ENCODE measurements at regions of chr5 and their contacts with region 1.

Region 1: GRCh38 chr5:137220523-137220927 is 278.6 kb downstream of the SPOCK1 start:
- DNase-seq: peak; percentile 96
- H3K4me3 Mint-ChIP-seq: no peak overlapping the region
- H3K27ac Mint-ChIP-seq: no peak overlapping the region
- H3K4me1 Mint-ChIP-seq: peaks cover 30% of the 10 kb centered on the region
- H3K27me3 Mint-ChIP-seq: no peaks in the 10 kb centered on the region
- CTCF ChIP-seq: peak; percentile 76

Region 2: GRCh38 chr5:136584474-136584873 is 636.1 kb before region 1 on chr5:
- CTCF ChIA-PET with region 1: no interaction called
- POLR2A ChIA-PET with region 1: no interaction called
- intact Hi-C with region 1: no loop called
- DNase-seq: no peak
- H3K4me3 Mint-ChIP-seq: no peak overlapping the region
- H3K27ac Mint-ChIP-seq: no peak overlapping the region
- H3K4me1 Mint-ChIP-seq: no peaks in the 10 kb centered on the region
- H3K27me3 Mint-ChIP-seq: peaks cover 23% of the 10 kb centered on the region
- CTCF ChIP-seq: no peak

Region 3: DNA sequence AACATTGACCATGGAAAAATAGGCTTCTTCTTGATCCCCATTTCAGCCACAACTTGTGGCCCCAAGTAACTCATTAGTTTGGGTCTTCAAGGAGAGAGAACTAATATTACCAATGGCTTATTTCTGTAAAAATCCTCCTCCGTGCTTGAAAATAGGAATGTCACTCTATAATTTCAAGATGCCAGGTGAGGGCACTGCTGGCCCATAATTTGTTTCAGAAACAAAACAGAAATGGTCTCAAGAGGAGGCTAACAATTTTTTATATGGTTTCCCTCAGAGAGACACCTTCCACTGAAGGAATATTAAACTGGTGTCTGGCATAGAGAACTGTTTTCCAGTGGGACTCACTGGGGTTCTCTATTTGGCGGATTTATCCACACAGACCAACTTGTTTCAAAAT is 418.1 kb before region 1 on chr5:
- CTCF ChIA-PET with region 1: interaction called, 39 read pairs
- POLR2A ChIA-PET with region 1: no interaction called
- intact Hi-C with region 1: loop called (anchors 1 kb)
- DNase-seq: peak; percentile 34
- H3K4me3 Mint-ChIP-seq: no peak overlapping the region
- H3K27ac Mint-ChIP-seq: no peak overlapping the region
- H3K4me1 Mint-ChIP-seq: no peaks in the 10 kb centered on the region
- H3K27me3 Mint-ChIP-seq: peaks cover 43% of the 10 kb centered on the region
- CTCF ChIP-seq: peak; percentile 49

Region 4: DNA sequence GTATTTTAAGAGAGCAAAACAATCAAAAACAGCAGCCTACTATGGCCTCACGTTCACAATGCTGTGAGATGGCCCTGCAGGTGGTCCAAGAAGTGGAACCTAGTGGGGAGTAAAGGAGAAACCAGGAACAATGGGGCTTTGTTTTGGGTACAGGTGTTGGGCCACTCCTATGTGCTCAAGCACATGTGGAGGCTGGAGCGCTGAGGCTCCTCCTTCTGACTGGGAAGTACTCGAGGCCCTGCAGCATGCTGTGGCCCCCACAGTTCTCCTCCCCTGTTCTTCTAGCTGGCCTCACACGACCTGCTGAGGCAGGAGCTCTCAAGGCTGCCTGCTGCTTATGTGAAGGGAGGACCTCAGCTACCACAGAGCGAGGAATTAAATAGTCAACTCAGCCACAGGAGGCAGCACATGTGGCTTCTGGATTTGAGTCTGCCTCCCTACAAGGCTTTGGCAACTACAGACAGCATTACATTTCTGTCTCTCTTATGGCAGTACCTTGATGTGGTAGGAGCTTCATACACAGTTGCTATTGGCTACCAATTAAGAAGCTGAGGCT is 203.7 kb before region 1 on chr5:
- CTCF ChIA-PET with region 1: no interaction called
- POLR2A ChIA-PET with region 1: no interaction called
- intact Hi-C with region 1: no loop called
- DNase-seq: no peak
- H3K4me3 Mint-ChIP-seq: no peak overlapping the region
- H3K27ac Mint-ChIP-seq: no peak overlapping the region
- H3K4me1 Mint-ChIP-seq: no peaks in the 10 kb centered on the region
- H3K27me3 Mint-ChIP-seq: no peaks in the 10 kb centered on the region
- CTCF ChIP-seq: no peak

Region 5: DNA sequence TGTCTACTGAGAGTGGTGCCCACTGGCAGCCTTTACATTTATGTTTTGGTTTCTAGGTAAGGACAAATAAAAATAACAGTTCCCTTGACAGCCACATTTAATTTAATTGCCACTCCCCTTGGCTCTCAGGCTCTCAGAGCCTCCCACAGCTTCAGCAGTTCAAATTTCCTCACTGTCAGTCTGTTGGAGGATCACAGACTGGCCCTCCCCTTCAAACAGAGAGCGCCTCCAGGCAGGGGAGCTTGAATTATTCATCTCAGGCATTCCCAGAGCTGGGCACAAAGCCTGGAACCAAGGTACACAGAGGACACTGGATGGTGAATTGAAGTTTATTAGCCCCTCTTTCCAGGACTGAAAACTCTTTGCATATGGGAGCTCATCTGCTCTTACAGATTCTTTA is 129.1 kb before region 1 on chr5:
- CTCF ChIA-PET with region 1: interaction called, 3 read pairs
- POLR2A ChIA-PET with region 1: no interaction called
- intact Hi-C with region 1: loop called (anchors 5 kb)
- DNase-seq: peak; percentile 74
- H3K4me3 Mint-ChIP-seq: no peak overlapping the region
- H3K27ac Mint-ChIP-seq: peak overlapping the region; percentile 65
- H3K4me1 Mint-ChIP-seq: peaks cover 29% of the 10 kb centered on the region
- H3K27me3 Mint-ChIP-seq: no peaks in the 10 kb centered on the region
- CTCF ChIP-seq: no peak

Region 6: GRCh38 chr5:137142764-137143605 is 77.5 kb before region 1 on chr5:
- CTCF ChIA-PET with region 1: no interaction called
- POLR2A ChIA-PET with region 1: interaction called, 3 read pairs
- intact Hi-C with region 1: loop called (anchors 1 kb)
- DNase-seq: peak; percentile 87
- H3K4me3 Mint-ChIP-seq: no peak overlapping the region
- H3K27ac Mint-ChIP-seq: peak overlapping the region; percentile 76
- H3K4me1 Mint-ChIP-seq: peaks cover 52% of the 10 kb centered on the region
- H3K27me3 Mint-ChIP-seq: no peaks in the 10 kb centered on the region
- CTCF ChIP-seq: no peak

Region 7: DNA sequence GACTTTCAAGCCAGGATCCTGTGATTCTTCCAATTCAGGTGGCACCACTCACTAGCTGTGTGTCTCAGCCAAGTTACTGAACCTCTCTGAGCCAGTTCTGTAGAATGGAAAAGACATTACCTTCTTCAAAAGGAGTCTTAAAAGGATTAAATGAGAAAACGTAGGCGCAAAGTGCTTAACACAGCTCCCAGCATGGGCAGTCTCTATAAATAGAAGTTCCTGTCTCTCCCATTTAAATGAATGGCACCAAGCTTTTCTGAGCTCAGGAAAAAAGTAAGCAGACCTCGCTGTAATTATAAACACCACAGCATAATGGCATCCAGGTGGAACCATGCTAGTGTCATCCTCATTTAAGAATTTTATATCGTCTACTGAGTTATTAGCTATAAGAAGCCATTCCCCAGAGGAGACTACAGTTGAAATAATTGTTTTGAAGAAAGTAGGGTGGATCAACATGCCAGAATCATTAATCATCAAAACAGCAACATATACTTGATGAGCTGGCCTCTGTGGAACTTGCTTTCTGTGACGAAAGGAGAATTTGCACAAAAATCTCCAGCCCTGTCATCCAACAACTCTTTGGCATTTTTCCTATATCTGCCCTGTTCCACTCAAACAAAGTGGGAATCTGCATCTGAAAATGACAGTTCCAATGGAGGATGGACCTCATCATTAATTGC is 89.7 kb after region 1 on chr5:
- CTCF ChIA-PET with region 1: no interaction called
- POLR2A ChIA-PET with region 1: interaction called, 3 read pairs
- intact Hi-C with region 1: loop called (anchors 5 kb)
- DNase-seq: peak; percentile 88
- H3K4me3 Mint-ChIP-seq: peak overlapping the region; percentile 18
- H3K27ac Mint-ChIP-seq: peak overlapping the region; percentile 95
- H3K4me1 Mint-ChIP-seq: peaks cover 28% of the 10 kb centered on the region
- H3K27me3 Mint-ChIP-seq: no peaks in the 10 kb centered on the region
- CTCF ChIP-seq: no peak